Activated CD4-positive, alpha-beta memory T cell treated with anti-CD3 and anti-CD28 coated beads, Interleukin-2, amount 10 ng/mL, durations not matched to agents 7 days and 5 days (primary cell): ENCODE measurements at regions of chr12 and their contacts with region 1.

Region 1: DNA sequence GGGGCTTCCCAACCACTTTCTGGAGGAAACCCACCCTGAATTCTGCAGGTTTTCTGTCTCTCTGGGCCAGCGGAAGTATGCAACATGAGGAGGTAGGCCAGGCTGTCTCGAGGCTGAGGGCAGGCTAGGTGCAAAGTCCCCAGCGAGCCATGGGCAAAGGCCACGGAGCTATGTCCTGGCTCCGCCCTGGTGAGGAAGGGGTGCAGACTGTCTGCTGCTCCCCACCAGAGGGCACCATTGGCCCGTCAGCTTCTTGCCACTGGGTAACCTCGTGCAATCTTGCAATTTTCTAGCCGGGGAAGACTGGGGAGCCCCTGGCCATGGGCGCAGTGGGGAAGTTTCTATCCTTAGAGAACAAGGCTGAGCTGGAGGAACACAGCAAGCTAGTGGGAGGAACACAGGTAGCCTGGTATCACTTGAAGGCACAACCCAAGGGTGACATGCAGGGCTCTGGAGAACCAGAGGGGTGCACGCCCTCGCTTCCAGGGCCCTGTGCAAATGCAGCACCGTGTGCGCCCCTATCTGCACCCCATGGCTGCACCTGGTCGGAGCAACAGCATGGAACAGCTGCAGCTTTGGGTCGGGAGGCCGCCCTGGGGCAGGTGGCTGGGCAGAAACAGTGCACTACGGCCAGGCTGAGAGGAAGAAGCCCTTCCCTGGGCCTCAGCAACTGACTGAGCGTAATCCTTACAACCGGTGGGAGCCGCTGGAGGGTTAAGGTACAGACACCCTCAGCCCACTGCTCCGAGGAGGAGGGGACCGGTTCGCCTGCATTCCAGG is 27.6 kb upstream of the RPLP0 start:
- DNase-seq: peak; percentile 91
- H3K4me3 Mint-ChIP-seq: peak overlapping the region; percentile 47
- H3K27ac Mint-ChIP-seq: peak overlapping the region; percentile 77
- H3K4me1 Mint-ChIP-seq: peaks cover 85% of the 10 kb centered on the region
- H3K27me3 Mint-ChIP-seq: no peaks in the 10 kb centered on the region

Region 2: DNA sequence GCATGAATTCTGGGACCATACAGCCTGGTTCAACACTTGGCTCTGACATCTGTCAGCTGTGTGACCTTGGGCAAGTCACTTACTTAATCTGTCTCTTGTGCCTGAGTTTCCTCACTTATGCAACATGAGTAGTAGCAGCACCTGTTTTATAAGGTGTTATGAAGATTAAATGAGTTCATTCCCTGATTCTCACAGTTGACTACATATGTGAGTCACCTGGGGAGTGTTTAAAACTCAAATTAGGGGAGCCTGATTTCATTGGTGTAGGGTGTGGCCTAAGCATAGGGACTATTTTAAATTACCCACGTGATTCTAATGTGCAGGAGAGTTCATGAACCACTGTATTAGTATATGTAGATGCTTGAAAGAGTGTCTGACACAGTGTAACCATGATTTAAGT is 671.6 kb before region 1 on chr12:
- CTCF ChIA-PET with region 1: no interaction called
- POLR2A ChIA-PET with region 1: no interaction called
- DNase-seq: no peak
- H3K4me3 Mint-ChIP-seq: no peak overlapping the region
- H3K27ac Mint-ChIP-seq: no peak overlapping the region
- H3K4me1 Mint-ChIP-seq: no peaks in the 10 kb centered on the region
- H3K27me3 Mint-ChIP-seq: peaks cover 1% of the 10 kb centered on the region

Region 3: GRCh38 chr12:120181991-120182631 is 46.4 kb before region 1 on chr12:
- CTCF ChIA-PET with region 1: no interaction called
- POLR2A ChIA-PET with region 1: no interaction called
- DNase-seq: no peak
- H3K4me3 Mint-ChIP-seq: no peak overlapping the region
- H3K27ac Mint-ChIP-seq: no peak overlapping the region
- H3K4me1 Mint-ChIP-seq: peaks cover 8% of the 10 kb centered on the region
- H3K27me3 Mint-ChIP-seq: no peaks in the 10 kb centered on the region

Region 4: DNA sequence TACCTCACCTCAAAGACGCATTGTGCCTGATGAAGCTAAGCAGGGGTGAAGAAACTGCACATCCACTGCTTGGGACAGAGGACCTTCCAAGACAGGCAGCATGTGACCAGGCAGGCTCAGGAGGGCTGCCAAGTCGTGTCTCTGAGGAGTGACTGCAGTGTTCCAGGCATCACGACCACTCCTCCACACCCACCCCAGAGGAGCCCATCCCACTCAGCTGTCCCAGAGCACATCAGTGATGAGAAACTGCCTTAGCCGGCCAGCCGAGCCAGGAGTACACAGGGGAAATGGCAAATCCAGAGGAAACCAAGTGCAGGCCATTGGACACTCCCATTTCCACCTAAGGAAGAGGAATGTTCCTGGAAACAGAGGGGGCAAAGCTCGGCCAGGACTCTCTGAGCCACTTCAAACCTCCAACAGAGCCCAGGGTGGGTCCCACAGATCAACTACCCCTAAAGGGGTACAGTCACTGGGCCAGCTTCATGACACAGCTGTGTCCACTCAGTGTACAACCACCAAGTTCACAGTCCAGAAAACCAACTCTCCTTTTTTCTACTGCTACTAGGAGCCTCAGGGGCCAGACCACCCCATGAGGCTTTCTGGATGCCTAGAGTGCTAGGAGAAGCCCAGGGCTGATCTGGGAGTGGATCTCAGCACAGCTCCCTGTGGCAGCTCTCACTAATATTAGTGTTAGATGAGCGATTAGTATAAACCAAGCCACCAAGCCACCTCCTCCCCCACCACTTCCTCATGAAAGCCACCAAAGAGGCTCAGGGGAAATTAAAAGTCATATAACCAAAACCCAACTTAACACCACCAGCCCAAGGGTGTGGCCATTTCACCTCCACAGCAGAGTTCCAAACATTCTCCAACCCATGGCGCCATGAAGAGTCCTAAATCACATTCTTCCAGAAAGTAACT is 21.7 kb after region 1 on chr12:
- CTCF ChIA-PET with region 1: interaction called, 228 read pairs
- POLR2A ChIA-PET with region 1: interaction called, 232 read pairs
- DNase-seq: peak; percentile 80
- H3K4me3 Mint-ChIP-seq: peak overlapping the region; percentile 57
- H3K27ac Mint-ChIP-seq: peak overlapping the region; percentile 96
- H3K4me1 Mint-ChIP-seq: peaks cover 84% of the 10 kb centered on the region
- H3K27me3 Mint-ChIP-seq: no peaks in the 10 kb centered on the region

Region 5: GRCh38 chr12:120257041-120257821 is 28.8 kb after region 1 on chr12:
- CTCF ChIA-PET with region 1: interaction called, 561 read pairs
- POLR2A ChIA-PET with region 1: interaction called, 280 read pairs
- DNase-seq: no peak
- H3K4me3 Mint-ChIP-seq: no peak overlapping the region
- H3K27ac Mint-ChIP-seq: peak overlapping the region; percentile 67
- H3K4me1 Mint-ChIP-seq: peaks cover 91% of the 10 kb centered on the region
- H3K27me3 Mint-ChIP-seq: no peaks in the 10 kb centered on the region

Region 6: GRCh38 chr12:120286796-120287465 is 58.5 kb after region 1 on chr12:
- CTCF ChIA-PET with region 1: interaction called, 81 read pairs
- POLR2A ChIA-PET with region 1: interaction called, 330 read pairs
- DNase-seq: no peak
- H3K4me3 Mint-ChIP-seq: no peak overlapping the region
- H3K27ac Mint-ChIP-seq: no peak overlapping the region
- H3K4me1 Mint-ChIP-seq: peaks cover 18% of the 10 kb centered on the region
- H3K27me3 Mint-ChIP-seq: peaks cover 18% of the 10 kb centered on the region